Activated CD4-positive, alpha-beta T cell treated with anti-CD3 and anti-CD28 coated beads, Interleukin-2, amount 10 ng/mL, durations not matched to agents 24 days and 14 days (primary cell): ENCODE measurements at regions of chr12 and their contacts with region 1.

Region 1: DNA sequence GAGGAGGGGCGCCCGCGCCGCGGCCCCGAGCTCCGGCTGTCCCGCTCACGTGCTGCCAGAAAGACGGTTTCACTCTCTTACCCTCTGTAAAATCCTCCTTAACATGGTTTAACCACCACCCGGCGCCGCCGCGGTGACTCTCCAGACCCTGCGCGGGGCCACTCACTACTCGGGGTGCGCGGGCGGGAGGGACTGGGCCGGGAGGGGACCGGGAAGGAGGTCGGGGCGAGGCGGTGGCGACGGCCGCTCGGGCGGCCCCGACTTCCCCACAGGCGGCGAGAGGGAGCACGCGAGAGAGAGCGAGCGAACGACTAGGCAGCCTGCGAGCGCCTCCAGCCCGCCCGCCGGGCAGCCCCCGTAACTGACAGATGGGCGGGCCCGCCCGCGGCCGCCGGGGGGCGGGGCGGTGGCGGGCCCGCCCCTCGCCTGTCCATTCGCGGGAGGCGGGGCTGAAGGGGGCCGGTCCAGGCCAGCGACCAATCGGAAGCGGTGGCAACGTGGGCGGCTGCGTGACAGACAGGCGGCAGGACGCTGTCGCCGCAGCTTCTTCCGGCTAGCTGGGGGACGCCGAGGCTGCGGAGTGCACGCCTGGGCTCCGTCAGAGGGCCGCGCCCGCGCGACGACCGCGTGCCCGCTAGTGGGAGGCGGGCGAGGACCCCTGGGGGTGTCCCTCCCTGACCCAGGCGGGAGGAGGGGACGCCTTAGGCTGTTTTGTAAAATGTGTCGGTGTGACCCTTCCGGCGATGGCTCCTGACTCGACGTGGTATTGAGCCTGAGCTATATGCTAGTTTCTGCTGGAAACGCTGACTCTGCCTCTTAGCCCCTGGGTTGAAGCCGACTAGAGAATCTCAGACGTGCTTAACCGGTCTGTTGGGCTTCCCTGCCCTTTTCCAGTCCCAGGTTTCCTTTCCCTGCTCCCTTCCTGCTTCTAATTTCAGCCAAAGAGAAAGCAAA is at the start of gene EEA1:
- DNase-seq: peak; percentile 98
- H3K4me3 Mint-ChIP-seq: peak within 1 kb of the TSS; percentile 89
- H3K27ac Mint-ChIP-seq: peak within 1 kb of the TSS; percentile 96
- H3K4me1 Mint-ChIP-seq: peaks cover 27% of the 10 kb centered on the region
- H3K27me3 Mint-ChIP-seq: peaks cover 6% of the 10 kb centered on the region
- total RNA-seq, gene EEA1: 22.2 and 23.4 TPM in 2 replicates

Region 2: GRCh38 chr12:92136965-92137721 is 792.1 kb before region 1 on chr12:
- intact Hi-C with region 1: loop called (anchors 5 kb)
- DNase-seq: peak; percentile 60
- H3K4me3 Mint-ChIP-seq: peak overlapping the region; percentile 99
- H3K27ac Mint-ChIP-seq: peak overlapping the region; percentile 82
- H3K4me1 Mint-ChIP-seq: peaks cover 66% of the 10 kb centered on the region
- H3K27me3 Mint-ChIP-seq: no peaks in the 10 kb centered on the region

Region 3: GRCh38 chr12:92784795-92785562 is 144.3 kb before region 1 on chr12:
- intact Hi-C with region 1: loop called (anchors 1 kb)
- DNase-seq: peak; percentile 82
- H3K4me3 Mint-ChIP-seq: no peak overlapping the region
- H3K27ac Mint-ChIP-seq: no peak overlapping the region
- H3K4me1 Mint-ChIP-seq: peaks cover 11% of the 10 kb centered on the region
- H3K27me3 Mint-ChIP-seq: no peaks in the 10 kb centered on the region

Region 4: DNA sequence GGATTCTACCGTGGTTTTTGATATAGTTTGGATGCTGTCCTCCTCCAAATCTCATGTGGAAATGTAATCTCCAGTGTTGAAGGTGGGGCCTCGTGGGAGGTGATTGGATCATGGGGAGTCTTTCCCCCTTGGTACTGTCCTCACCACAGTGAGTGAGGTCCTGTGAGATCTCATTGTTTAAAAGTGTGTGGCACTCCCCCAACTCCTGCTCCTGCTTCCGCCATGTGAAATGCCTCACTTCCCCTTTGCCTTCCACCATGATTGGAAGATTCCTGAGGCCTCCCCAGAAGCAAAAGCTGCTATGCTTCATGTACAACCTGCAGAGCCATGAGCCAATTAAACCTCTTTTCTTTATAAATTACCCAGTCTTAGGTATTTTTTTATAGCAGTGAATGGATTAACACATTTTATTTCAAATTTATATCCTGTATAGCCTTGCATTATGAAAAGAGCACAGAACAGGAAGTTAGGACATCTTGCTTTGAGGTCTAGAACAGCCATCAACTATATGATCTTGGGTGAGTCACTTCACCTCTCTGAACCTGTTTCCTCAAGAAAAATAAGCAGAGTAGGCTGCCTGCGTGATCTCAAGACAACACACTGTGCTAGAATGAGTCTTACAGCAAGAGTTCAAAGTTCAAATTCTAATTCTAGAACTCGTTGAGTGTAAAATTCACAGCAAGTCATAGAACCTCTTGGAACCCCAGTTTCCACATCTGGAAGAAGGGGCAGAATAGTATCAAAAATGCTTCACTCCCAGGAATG is 160.7 kb after region 1 on chr12:
- intact Hi-C with region 1: loop called (anchors 1 kb)
- DNase-seq: peak; percentile 69
- H3K4me3 Mint-ChIP-seq: peak overlapping the region; percentile 1
- H3K27ac Mint-ChIP-seq: peak overlapping the region; percentile 59
- H3K4me1 Mint-ChIP-seq: peaks cover 11% of the 10 kb centered on the region
- H3K27me3 Mint-ChIP-seq: no peaks in the 10 kb centered on the region

Region 5: DNA sequence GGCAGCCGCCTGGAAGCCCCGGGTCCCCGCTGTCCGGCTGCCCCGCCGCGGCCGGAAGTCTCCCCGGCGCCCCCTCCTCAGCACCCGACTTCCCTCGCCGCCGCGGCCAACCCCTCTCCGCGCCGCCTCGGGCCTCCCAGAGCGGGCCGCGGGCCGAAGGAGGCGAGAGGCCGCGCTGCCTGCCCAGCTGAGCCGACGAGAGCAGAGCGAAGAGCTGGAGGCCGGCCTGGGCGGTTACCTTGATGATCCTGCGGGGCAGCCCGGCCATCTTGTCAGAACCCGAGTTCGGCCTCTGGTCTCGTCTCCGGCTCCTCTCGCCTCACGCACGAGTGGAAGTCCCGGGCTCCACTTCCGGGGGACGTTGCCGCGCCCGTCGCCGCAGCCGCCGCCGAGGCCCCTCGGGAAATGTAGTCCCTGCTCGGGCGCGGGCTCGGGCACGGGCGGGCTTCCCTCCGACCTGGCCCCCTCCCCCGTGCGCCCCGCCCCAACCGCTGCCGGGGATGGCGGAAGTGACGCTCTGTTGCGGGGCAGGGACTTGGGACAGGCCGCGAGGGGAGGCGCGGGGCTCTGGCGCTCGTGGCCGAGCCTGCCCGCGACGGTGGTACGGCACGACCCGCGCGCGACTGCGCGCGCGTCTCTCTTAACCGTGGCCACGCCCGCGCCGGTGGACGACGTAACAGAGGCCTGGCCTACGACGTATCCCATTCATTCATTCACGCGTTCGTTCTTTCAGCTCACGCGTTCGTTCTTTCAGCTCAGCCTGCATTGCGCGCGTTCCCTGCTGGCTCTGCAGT is 512.6 kb after region 1 on chr12 and contains the start of gene UBE2N:
- intact Hi-C with region 1: loop called (anchors 1 kb)
- DNase-seq: peak; percentile 99
- H3K4me3 Mint-ChIP-seq: peak within 1 kb of the TSS; percentile 94
- H3K27ac Mint-ChIP-seq: peak within 1 kb of the TSS; percentile 97
- H3K4me1 Mint-ChIP-seq: peaks cover 43% of the 10 kb centered on the region
- H3K27me3 Mint-ChIP-seq: no peaks in the 10 kb centered on the region
- total RNA-seq, gene UBE2N: 225 and 243 TPM in 2 replicates

Region 6: GRCh38 chr12:93467351-93468007 is 538.2 kb after region 1 on chr12 and contains the start of gene MRPL42:
- intact Hi-C with region 1: no loop called
- DNase-seq: peak; percentile 99
- H3K4me3 Mint-ChIP-seq: peak within 1 kb of the TSS; percentile 91
- H3K27ac Mint-ChIP-seq: peak within 1 kb of the TSS; percentile 93
- H3K4me1 Mint-ChIP-seq: peaks cover 29% of the 10 kb centered on the region
- H3K27me3 Mint-ChIP-seq: no peaks in the 10 kb centered on the region
- total RNA-seq, gene MRPL42: 92.4 and 96.0 TPM in 2 replicates

Region 7: GRCh38 chr12:94101738-94102660 is 1172.8 kb after region 1 on chr12:
- intact Hi-C with region 1: loop called (anchors 5 kb)
- DNase-seq: peak; percentile 96
- H3K4me3 Mint-ChIP-seq: peak overlapping the region; percentile 88
- H3K27ac Mint-ChIP-seq: peak overlapping the region; percentile 84
- H3K4me1 Mint-ChIP-seq: peaks cover 37% of the 10 kb centered on the region
- H3K27me3 Mint-ChIP-seq: peaks cover 12% of the 10 kb centered on the region